ENCODE measurements at regions of chr3 and their contacts with region 1.

Region 1: GRCh38 chr3:177359593-177360357 is 162.5 kb upstream of the TBL1XR1 start:
- DNase-seq: peak; percentile 98
- H3K4me3 Mint-ChIP-seq: peak overlapping the region; percentile 81
- H3K27ac Mint-ChIP-seq: peak overlapping the region; percentile 96
- H3K4me1 Mint-ChIP-seq: peaks cover 53% of the 10 kb centered on the region
- H3K27me3 Mint-ChIP-seq: peaks cover 2% of the 10 kb centered on the region

Region 2: DNA sequence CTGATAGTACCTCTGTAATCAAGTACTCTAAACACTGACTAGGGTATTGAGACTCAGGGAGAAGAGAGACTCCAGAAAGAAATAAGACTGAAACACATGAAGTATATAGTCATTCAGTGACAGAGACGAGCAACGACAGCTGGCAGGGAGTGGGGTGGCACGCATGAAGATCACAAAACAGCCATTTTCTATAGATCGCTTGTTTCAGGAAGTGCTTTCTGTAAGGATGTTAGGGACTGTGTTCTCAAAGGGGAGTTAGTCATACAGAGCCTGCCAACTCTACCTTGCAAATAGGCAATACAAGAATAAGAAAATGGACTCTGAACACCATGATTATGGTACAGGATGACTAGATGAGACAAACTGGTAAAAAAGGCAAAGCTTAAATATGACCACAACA is 302.0 kb before region 1 on chr3:
- intact Hi-C with region 1: loop called (anchors 1 kb)
- DNase-seq: peak; percentile 76
- H3K4me3 Mint-ChIP-seq: no peak overlapping the region
- H3K27ac Mint-ChIP-seq: no peak overlapping the region
- H3K4me1 Mint-ChIP-seq: peaks cover 19% of the 10 kb centered on the region
- H3K27me3 Mint-ChIP-seq: no peaks in the 10 kb centered on the region

Region 3: DNA sequence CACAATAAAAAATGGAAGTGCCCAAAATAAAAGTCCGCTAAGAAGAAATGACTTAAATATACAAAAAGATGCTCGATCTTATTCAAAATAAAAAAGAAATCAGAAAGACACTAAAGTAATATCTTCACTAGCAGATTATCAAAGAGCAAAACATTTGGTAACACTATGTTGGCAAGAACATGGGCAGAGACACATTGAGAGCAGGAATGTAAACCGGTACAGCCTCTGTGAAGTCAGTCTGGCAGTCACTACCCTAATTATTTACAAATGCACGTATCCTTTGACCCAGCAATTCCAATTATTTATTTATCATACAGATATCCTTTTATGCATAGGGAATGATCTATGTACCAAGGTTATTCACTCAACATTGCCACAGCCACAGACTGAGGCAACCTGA is 197.0 kb before region 1 on chr3:
- intact Hi-C with region 1: no loop called
- DNase-seq: no peak
- H3K4me3 Mint-ChIP-seq: no peak overlapping the region
- H3K27ac Mint-ChIP-seq: no peak overlapping the region
- H3K4me1 Mint-ChIP-seq: peaks cover 46% of the 10 kb centered on the region
- H3K27me3 Mint-ChIP-seq: no peaks in the 10 kb centered on the region

Region 4: DNA sequence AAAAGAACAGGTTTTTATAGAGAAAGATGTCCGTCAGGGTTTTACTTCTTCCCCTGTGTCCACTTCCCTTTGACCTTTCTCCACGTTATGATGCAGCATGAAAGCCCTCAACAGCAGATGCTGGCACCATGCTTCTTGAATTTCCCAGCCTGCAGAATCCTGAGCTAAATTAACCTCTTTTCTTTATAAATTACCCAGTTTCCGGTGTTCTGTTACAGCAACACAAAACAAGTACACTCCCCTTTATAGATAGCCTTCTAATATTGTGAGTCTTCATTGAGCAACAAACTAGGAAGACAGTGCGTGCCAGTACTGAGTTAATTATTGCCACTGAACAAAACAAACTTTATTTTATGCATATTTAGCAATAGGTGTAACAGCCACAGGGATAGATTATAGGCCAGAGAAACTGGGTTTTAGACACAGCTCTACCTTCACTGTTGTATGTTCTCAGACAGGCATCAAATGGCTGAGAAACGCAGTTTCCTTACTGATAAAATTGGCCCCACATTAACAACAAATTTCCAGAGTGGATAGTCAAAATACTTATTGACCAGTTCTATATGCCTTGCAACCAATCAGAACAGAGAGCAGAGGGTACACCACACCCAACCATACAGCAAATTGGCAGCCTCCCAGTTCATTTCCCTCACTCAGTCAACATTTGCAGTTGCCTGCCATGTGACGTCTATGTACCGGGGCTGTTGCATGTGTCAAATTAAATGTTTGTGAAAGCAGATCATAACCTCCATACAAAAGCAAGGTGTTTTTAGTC is 148.1 kb before region 1 on chr3:
- intact Hi-C with region 1: no loop called
- DNase-seq: no peak
- H3K4me3 Mint-ChIP-seq: no peak overlapping the region
- H3K27ac Mint-ChIP-seq: no peak overlapping the region
- H3K4me1 Mint-ChIP-seq: peaks cover 6% of the 10 kb centered on the region
- H3K27me3 Mint-ChIP-seq: no peaks in the 10 kb centered on the region

Region 5: GRCh38 chr3:177300039-177300833 is 59.5 kb before region 1 on chr3:
- intact Hi-C with region 1: loop called (anchors 5 kb)
- DNase-seq: no peak
- H3K4me3 Mint-ChIP-seq: no peak overlapping the region
- H3K27ac Mint-ChIP-seq: no peak overlapping the region
- H3K4me1 Mint-ChIP-seq: peaks cover 7% of the 10 kb centered on the region
- H3K27me3 Mint-ChIP-seq: no peaks in the 10 kb centered on the region

Region 6: DNA sequence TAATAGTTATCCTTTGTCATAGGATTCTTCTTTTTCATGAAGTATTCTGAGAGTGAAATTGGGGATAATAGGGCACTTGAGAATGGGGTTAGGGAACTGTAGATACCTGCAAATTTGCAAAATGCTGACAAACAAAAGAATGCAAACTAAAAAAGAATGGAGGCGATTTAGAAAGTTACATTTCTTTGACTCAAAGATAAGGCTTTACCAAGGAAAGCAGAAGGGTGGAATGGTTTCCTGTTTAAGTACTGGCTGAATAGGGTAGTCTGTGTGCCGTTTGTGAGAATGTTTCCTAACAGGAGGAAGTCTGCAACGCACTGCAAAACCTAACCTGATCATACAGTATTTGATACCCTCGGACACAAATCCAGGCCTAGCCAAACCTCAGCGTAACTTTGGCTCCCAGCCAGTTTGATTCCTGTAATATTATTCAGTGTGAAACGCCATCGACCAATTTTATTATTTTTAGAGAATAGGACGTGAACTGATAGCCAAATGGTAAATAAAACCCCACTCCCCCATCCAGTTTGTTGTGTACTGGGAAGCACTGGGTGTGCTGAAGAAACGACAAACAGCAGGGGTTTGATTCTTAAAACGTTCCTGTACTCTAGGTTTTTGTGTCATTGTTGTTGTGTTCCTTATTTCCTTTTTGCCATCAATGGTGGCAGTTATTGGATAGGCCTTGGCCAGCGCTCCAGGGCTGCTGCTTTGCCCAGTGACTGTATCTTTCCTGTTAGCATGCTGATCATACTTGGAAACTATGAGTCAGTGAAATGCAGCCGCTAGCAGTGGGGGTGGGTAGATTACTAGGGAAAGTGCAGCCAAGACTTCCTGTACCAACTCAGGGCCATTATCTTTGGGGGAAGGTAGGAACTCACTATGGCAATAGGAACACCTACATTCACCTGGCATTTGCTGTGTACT is 14.5 kb before region 1 on chr3:
- intact Hi-C with region 1: loop called (anchors 1 kb)
- DNase-seq: peak; percentile 90
- H3K4me3 Mint-ChIP-seq: peak overlapping the region; percentile 47
- H3K27ac Mint-ChIP-seq: peak overlapping the region; percentile 97
- H3K4me1 Mint-ChIP-seq: peaks cover 35% of the 10 kb centered on the region
- H3K27me3 Mint-ChIP-seq: peaks cover 2% of the 10 kb centered on the region

Region 7: DNA sequence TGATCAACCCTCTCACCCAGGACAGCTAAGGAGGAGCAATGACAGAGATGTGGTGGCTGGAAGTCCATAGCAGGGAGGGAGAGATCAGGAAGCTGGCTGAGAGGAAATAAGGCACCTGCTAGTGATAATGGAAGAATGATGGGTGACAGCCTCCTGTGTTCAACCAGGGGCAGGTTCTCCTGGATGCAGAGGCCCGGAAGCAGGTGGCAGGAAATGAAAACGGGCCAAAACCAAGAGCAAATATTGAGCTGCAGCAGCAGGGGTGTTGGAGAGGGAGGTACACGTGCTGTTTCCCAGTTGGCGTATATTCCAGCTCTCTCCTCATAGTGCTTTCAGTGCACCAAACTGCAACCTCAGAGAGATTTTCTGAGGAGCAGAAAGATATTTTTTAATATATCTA is 51.0 kb after region 1 on chr3:
- intact Hi-C with region 1: no loop called
- DNase-seq: no peak
- H3K4me3 Mint-ChIP-seq: no peak overlapping the region
- H3K27ac Mint-ChIP-seq: peak overlapping the region; percentile 30
- H3K4me1 Mint-ChIP-seq: peaks cover 5% of the 10 kb centered on the region
- H3K27me3 Mint-ChIP-seq: peaks cover 3% of the 10 kb centered on the region

Region 8: GRCh38 chr3:177597311-177598096 is 237.7 kb after region 1 on chr3:
- intact Hi-C with region 1: loop called (anchors 2 kb)
- DNase-seq: peak; percentile 77
- H3K4me3 Mint-ChIP-seq: peak overlapping the region; percentile 77
- H3K27ac Mint-ChIP-seq: peak overlapping the region; percentile 95
- H3K4me1 Mint-ChIP-seq: peaks cover 55% of the 10 kb centered on the region
- H3K27me3 Mint-ChIP-seq: no peaks in the 10 kb centered on the region

Region 9: GRCh38 chr3:177917234-177917861 is 557.6 kb after region 1 on chr3:
- intact Hi-C with region 1: no loop called
- DNase-seq: no peak
- H3K4me3 Mint-ChIP-seq: no peak overlapping the region
- H3K27ac Mint-ChIP-seq: no peak overlapping the region
- H3K4me1 Mint-ChIP-seq: no peaks in the 10 kb centered on the region
- H3K27me3 Mint-ChIP-seq: no peaks in the 10 kb centered on the region